Heart right ventricle (tissue), 16 donors: ENCODE measurements at regions of chr4 and their contacts with region 1.

Region 1: DNA sequence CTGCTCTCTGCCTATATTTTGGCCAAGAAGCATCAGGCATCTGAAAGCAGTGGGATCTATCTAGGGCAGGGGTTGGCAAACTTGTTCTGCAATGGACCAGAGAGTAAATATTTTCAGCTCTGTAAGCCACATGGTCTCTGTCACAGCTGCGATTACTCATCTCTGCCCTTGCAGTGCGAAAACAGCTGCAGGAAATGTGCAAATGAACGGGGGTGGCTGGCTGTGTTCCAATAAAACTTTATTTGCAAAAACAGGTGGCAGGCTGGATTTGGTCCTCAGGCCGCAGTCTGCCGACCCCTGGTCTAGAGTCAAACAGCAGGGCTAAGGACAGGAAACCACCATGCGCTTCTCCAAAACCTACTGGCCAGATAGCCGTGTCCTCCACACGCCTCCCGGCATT is 48.6 kb downstream of the ACOX3 start:
- DNase-seq: peak; percentile 43 to 78
- ATAC-seq: peak in 7 of 8 donors; percentile 32 to 60 (median 41)
- H3K4me3 ChIP-seq: no peak overlapping the region
- H3K27ac ChIP-seq: peak overlapping the region in 5 of 10 donors; percentile 43 to 88 (median 73)
- H3K4me1 ChIP-seq: peaks cover 0 to 49% (median 30%) of the 10 kb centered on the region in 9 donors
- H3K27me3 ChIP-seq: no peaks in the 10 kb centered on the region
- CTCF ChIP-seq: peak in 2 of 9 donors; percentile 4 to 28

Region 2: DNA sequence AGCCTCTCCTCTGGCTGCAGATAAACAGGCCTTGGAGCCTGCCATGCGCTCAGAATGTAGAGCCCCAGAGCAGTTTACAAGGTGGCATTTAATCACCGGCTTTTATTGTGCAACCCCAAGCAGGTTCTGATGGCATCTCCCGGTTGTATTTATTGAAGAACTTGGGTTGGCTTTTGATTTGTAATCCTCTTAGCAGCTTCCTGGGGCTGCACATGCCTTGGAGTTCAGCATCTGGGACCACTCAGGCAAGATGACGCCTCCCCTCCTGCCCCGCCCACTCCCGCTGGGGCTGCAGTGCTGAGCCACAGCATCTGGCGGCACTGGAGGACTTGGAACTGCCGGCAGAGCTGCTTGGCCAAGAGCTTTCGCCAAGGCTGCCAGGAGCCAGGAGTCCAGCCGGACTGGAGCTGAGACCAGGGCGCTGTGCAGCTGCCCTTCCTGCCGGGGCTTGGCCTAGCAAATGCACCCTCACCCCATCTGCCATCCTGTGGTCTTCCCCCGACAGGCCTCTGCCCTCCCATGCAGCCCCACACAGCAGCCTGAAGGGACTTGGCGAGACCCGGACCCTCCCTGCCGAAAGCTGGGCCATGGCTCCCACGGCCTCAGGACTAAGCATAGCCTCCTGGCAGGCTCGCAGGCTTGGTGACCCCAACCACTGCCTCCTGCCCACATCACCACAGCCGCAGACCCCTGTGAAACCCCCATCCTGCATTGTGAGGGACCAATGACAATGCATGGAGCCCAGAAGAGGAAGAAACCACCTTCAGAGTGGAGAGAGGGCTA is 117.0 kb before region 1 on chr4:
- intact Hi-C with region 1: loop called in 1 of 10 experiments (anchors 2 kb)
- DNase-seq: peak; percentile 87 to 89
- ATAC-seq: peak; percentile 67 to 84 (median 78)
- H3K4me3 ChIP-seq: no peak overlapping the region
- H3K27ac ChIP-seq: peak overlapping the region in 8 of 10 donors; percentile 42 to 86 (median 70)
- H3K4me1 ChIP-seq: peaks cover 53 to 96% (median 72%) of the 10 kb centered on the region in 9 donors
- H3K27me3 ChIP-seq: peaks cover 0 to 12% (median 0%) of the 10 kb centered on the region in 7 donors
- CTCF ChIP-seq: peak in 8 of 9 donors; percentile 12 to 67 (median 34)

Region 3: GRCh38 chr4:8315435-8316250 is 76.3 kb before region 1 on chr4:
- intact Hi-C with region 1: loop called in 1 of 10 experiments (anchors 10 kb)
- DNase-seq: no peak
- ATAC-seq: peak in 6 of 8 donors; percentile 39 to 70 (median 60)
- H3K4me3 ChIP-seq: no peak overlapping the region
- H3K27ac ChIP-seq: peak overlapping the region in 7 of 10 donors; percentile 28 to 64 (median 54)
- H3K4me1 ChIP-seq: peaks cover 5 to 45% (median 26%) of the 10 kb centered on the region in 9 donors
- H3K27me3 ChIP-seq: no peaks in the 10 kb centered on the region
- CTCF ChIP-seq: no peak

Region 4: DNA sequence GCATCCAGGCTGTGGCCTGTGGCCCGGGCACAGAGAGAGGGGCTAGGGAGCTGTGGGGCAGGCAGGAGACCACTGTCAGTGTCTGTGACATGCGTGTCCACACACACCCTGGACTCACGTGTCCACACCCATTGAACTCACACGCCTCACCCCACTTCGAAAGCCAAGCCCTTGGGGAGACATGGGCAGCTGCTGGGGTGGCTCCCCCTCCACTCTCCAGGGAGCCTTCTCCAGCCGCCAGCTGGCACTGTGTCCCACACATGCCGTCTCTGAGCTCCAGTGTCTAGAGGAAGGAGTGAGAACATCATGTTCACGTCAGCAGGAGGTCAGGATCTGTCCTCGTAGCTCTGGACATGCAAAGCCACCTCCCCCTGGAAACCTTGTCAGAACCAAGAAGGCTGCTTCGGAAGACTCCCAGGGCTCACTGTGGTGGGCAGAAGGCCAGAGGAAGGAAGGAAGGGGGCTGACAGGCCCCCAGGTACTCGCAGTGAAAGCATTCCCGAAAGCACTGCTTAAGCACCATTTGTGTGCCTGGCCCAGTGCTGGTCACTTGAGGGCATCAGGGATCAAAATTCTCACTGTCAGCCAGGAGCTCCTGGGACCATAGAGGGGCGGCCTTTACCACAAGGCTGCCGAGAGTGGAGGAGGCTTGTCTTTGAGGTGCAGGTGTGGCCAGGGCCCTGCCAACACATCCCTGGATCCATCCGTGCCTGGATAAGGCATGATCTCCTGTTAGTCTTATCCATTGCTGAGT is 61.0 kb before region 1 on chr4:
- intact Hi-C with region 1: loop called in 2 of 10 experiments (anchors 10 kb)
- DNase-seq: peak; percentile 47 to 81
- ATAC-seq: peak; percentile 68 to 96 (median 92)
- H3K4me3 ChIP-seq: no peak overlapping the region
- H3K27ac ChIP-seq: peak overlapping the region in 9 of 10 donors; percentile 14 to 69 (median 53)
- H3K4me1 ChIP-seq: peaks cover 3 to 22% (median 16%) of the 10 kb centered on the region in 9 donors
- H3K27me3 ChIP-seq: no peaks in the 10 kb centered on the region
- CTCF ChIP-seq: peak in 6 of 9 donors; percentile 7 to 46 (median 37)

Region 5: GRCh38 chr4:8340781-8341241 is 51.2 kb before region 1 on chr4:
- intact Hi-C with region 1: loop called in 3 of 10 experiments (anchors 2 to 10 kb)
- DNase-seq: peak; percentile 86 to 88
- ATAC-seq: peak; percentile 93 to 97 (median 95)
- H3K4me3 ChIP-seq: no peak overlapping the region
- H3K27ac ChIP-seq: peak overlapping the region; percentile 58 to 91 (median 82)
- H3K4me1 ChIP-seq: peaks cover 14 to 43% (median 31%) of the 10 kb centered on the region in 9 donors
- H3K27me3 ChIP-seq: no peaks in the 10 kb centered on the region
- CTCF ChIP-seq: no peak